ENCODE measurements at regions of chr1 and their contacts with region 1.

Region 1: DNA sequence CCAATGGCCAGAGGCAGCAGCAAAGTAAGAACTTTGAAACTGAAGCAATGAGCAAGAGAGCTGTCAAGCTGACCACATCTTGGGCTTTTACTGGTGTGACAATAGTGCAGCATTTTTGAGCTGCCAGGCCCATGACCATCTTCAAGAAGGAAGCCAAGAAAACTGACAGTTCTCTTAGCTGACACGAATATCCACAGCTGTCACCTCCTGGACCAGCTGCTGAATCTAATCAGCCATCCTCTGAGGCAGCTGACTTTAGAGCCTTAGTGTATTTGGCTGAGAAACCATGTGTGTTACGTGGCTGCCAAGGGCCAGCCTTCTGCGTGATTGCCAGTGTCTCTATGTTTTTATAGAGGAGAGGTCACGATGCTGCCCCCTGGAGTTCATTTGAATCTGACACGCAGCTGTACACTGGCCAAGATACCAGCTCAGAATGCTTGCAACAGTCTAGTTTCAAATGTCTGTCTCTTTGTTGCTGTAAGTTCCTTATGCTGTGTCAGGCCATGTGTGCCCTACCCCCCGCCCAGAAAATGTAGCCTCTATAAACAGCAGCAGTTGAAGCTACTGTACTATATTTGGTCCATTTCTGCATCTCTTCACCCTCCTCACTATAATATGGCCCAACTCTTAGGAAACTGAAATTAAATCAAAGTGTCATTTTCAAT is 39.7 kb downstream of the PALMD start:
- DNase-seq: peak; percentile 77
- ATAC-seq: peak; percentile 78
- H3K4me3 ChIP-seq: no peak overlapping the region
- H3K27ac ChIP-seq: no peak overlapping the region
- H3K4me1 ChIP-seq: peaks cover 12% of the 10 kb centered on the region
- H3K27me3 ChIP-seq: no peaks in the 10 kb centered on the region
- CTCF ChIP-seq: peak; percentile 84

Region 2: GRCh38 chr1:99659755-99660210 is 25.9 kb before region 1 on chr1:
- CTCF ChIA-PET with region 1: no interaction called
- POLR2A ChIA-PET with region 1: no interaction called
- intact Hi-C with region 1: loop called (anchors 1 kb)
- DNase-seq: peak; percentile 94
- ATAC-seq: peak; percentile 96
- H3K4me3 ChIP-seq: peak overlapping the region; percentile 11; the same call in 1 of the 2 replicates
- H3K27ac ChIP-seq: peak overlapping the region; percentile 94
- H3K4me1 ChIP-seq: peaks cover 35% of the 10 kb centered on the region
- H3K27me3 ChIP-seq: no peaks in the 10 kb centered on the region
- CTCF ChIP-seq: no peak

Measured in PC-3 (cell line).